ENCODE measurements at regions of chr2 and their contacts with region 1.

Region 1: DNA sequence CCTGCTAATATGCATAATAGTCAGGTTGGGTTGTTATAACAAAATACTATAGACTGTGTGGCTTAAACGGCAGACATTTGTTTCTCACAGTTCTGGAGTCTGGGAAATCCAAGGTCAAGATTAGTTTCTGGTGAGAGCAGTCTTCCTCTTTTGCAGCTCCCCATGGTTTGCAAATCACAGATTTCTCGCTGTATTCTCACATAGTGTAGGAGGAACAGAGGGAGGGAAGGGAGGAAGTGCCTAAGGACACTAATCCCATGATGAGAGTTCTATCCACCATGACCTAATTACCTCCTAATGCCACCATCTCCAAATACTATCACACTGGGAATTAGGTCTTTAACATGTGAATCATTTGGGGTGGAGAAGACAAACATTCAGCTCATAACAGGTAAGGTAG is 20.1 kb upstream of the PTH2R start:
- DNase-seq: no peak
- CTCF ChIP-seq: no peak

Region 2: GRCh38 chr2:208354964-208355381 is 31.6 kb before region 1 on chr2:
- CTCF ChIA-PET with region 1: no interaction called
- POLR2A ChIA-PET with region 1: no interaction called
- DNase-seq: no peak
- CTCF ChIP-seq: no peak

Region 3: DNA sequence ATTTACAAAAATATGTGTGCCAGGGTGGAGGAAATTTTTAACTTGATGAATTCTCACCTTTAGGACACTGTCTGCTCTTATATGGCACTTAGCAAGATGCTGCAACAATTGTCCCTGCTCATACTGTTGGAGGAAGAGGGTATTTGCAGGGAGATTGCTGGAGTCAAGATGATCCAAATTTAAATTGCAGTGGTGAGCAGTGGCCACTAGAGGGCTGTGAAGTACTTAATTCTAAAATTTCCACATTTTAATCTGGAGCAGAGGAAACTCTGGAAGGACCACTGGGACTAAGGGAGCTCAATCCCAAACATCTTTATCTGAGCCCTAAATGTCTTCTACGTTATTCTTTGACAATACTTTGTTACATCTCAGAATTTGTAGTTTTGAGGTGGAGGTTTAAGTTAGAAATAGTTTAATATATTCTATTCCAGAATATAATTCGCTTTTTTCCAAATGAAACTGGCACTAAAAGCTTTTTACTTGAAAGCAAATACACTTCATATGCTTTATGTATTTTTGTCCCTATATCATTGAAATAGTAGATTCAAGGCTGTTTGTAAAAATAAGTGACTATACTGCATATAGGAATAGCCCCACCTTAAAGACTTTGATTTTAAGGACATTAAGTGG is 13.0 kb before region 1 on chr2:
- CTCF ChIA-PET with region 1: interaction called, 14 read pairs
- POLR2A ChIA-PET with region 1: no interaction called
- DNase-seq: peak; percentile 54
- CTCF ChIP-seq: peak; percentile 76